Body of pancreas (tissue), 4 donors: ENCODE measurements at regions of chr9 and their contacts with region 1.

Region 1: DNA sequence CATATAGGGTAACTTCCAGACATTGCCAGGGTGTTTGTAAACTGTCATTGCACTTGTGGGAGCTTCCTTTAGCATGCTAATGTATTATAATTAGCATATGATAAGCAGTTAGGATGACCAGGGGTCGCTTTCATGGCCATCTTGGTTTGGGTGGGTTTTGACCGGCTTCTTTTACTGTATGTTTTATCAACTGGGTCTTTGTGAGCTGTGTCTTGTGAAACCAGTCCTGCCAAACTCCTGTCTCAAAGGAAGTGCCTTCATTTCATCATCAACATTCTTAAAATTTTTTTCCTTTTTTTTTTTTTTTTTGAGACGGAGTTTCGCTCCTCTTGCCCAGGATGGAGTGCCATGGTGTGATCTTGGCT is 11.9 kb upstream of the MELK start:
- DNase-seq: no peak
- ATAC-seq: no peak
- H3K4me3 ChIP-seq: no peak overlapping the region
- H3K27ac ChIP-seq: no peak overlapping the region
- H3K4me1 ChIP-seq: no peaks in the 10 kb centered on the region
- H3K27me3 ChIP-seq: no peaks in the 10 kb centered on the region
- CTCF ChIP-seq: no peak
- POLR2A ChIP-seq: no peak

Region 2: DNA sequence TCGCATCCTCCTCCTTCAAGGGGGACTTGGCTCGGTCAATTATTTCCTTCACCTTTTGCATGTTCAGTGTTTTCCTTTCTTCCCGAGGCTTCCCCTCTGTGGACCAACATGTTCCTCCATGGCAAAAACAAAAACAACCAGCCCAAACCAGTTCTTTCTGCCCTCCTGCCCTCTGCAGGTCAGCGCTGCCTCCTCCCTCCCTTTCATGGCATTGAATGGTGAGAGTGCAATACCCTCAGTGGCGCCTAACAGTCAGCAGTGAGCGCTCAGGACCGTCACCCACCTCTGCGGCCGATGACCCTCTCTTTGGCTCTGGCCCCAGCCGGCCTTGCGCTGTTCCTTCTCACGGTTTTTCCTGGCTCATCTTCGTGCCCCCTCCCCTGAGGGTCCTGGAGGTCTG is 268.2 kb before region 1 on chr9:
- intact Hi-C with region 1: no loop called
- DNase-seq: no peak
- ATAC-seq: no peak
- H3K4me3 ChIP-seq: no peak overlapping the region
- H3K27ac ChIP-seq: no peak overlapping the region
- H3K4me1 ChIP-seq: peaks cover 4% of the 10 kb centered on the region
- H3K27me3 ChIP-seq: no peaks in the 10 kb centered on the region
- CTCF ChIP-seq: no peak
- POLR2A ChIP-seq: no peak

Region 3: GRCh38 chr9:36402536-36402935 is 158.3 kb before region 1 on chr9:
- intact Hi-C with region 1: loop called (anchors 2 kb)
- DNase-seq: no peak
- ATAC-seq: no peak
- H3K4me3 ChIP-seq: no peak overlapping the region
- H3K27ac ChIP-seq: peak overlapping the region in 2 of 4 donors; percentile 99
- H3K4me1 ChIP-seq: peaks cover 32% of the 10 kb centered on the region
- H3K27me3 ChIP-seq: no peaks in the 10 kb centered on the region
- CTCF ChIP-seq: no peak
- POLR2A ChIP-seq: no peak